ENCODE measurements at regions of chr3 and their contacts with region 1.

Region 1: DNA sequence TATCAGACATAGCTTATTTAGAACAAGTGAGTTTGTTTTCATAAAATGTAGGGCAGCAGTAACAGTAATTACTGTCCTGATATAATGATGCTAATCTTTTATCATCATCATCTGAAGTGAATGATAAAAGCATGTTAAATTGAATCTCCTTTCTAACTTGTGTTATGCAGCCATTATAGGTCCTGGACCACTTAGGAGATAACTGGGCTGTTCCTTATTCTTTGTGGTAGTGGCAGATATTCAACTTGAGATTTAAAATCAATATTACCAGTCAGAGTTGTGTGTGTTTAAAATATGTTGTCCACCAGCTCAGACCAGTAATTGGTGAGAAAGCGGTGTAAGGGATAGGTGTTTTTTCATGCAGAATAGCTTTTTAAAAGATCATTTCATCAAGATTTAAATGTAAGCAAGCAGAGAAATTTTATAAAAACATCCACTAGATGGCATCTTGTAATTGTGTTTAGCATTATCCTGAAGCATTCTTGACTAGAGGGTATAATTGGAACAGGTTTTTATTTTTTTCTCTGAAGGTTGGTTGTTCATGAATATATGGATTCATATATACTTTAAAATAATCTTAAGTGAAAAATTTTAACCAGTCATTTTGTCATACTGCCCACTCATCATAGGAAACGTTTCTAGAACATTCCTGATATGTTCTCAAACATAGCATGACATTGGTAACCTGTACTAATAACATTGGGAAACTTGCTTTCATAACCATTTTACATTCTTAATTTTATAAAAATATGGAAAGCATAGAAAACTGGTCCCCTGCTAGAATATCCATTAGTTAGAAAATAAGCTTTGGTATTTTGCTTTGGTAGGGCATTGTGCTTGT is 153.9 kb downstream of the BBX start:
- DNase-seq: peak in 1 of 35 experiments; percentile 42
- ATAC-seq: peak in 2 of 4 experiments; percentile 50 to 54
- H3K4me3 ChIP-seq: no peak overlapping the region
- H3K4me3 Mint-ChIP-seq: no peak overlapping the region
- H3K27ac ChIP-seq: no peak overlapping the region
- H3K27ac Mint-ChIP-seq: peak overlapping the region in 1 of 2 donors; percentile 3
- H3K4me1 ChIP-seq: peaks cover 0 to 6% of the 10 kb centered on the region in 2 experiments
- H3K4me1 Mint-ChIP-seq: peaks cover 41 to 42% (median 41%) of the 10 kb centered on the region in 3 donors
- H3K27me3 ChIP-seq: no peaks in the 10 kb centered on the region
- H3K27me3 Mint-ChIP-seq: no peaks in the 10 kb centered on the region

Region 2: DNA sequence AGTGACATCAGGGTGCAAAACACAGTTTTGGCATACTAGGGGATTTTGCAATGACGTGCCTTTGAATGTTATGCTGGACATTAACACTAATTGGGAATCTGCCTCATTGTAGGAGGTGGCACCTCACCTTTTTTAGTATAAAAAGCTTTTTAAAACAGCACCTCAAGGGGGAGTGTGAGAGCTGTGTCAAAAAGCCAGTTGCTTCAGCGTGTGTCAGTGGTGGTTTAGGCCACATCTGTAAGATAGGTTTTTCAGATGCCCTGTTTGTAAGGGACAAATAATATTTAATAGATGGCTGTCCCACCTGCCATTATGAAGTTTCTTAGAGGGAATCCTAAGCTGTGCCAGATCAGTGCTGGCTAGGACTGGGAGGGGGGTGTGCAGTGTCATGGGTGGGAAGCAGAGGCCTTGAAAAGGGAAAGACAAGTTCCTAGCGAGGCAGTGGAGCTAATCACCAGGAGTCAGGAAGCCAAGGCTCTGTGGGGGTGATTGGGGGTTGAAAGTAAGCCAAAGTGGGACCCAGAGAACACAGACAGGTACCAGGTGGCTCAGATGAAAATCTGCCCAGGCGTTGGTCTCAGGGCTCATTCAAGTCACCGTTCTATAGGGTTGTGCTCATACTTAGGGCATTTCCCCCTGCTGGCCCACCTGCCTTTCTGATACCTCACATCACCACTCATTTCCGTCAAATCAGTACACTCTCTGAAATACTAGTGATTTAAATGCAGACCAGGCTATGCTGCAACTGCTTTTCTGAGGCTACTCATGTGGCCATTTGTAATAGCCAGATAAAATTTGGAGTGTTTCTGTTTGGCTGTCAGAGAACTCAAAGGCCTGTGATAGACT is 33.4 kb before region 1 on chr3:
- CTCF ChIA-PET with region 1: interaction called in 1 of 2 experiments, 20 read pairs
- POLR2A ChIA-PET with region 1: no interaction called
- DNase-seq: peak in 1 of 35 experiments; percentile 9
- ATAC-seq: no peak
- H3K4me3 ChIP-seq: no peak overlapping the region
- H3K4me3 Mint-ChIP-seq: no peak overlapping the region
- H3K27ac ChIP-seq: no peak overlapping the region
- H3K27ac Mint-ChIP-seq: no peak overlapping the region
- H3K4me1 ChIP-seq: peaks cover 0 to 7% of the 10 kb centered on the region in 2 experiments
- H3K4me1 Mint-ChIP-seq: peaks cover 20 to 35% (median 27%) of the 10 kb centered on the region in 3 donors
- H3K27me3 ChIP-seq: no peaks in the 10 kb centered on the region
- H3K27me3 Mint-ChIP-seq: no peaks in the 10 kb centered on the region

Region 3: DNA sequence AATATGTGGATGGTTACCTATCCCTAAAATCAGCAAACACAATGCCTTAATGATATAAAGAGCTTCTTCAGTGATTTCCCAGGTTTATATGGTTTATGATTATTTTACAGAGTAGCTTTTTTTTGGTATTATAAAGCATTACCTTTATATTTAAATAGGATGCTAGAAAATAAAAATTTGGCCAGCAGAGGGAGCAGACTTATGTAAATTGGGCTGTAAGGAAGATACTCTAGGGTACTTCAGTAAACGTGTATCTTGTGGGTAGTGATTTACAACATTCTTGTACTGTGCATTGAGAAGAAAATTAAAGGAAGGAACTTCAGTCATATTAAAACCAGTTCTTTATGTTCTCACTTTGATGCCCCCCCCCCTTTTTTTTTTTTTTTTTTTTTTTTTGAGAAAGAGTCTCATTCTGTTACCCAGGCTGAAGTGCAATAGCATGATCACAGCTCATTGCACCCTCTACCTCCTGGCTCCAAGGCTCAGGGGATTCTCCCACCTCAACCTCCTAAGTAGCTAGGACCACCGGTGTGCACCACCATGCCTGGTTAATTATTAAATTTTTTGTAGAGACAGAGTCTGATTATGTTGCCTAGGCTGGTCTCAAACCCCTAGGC is 13.9 kb after region 1 on chr3:
- CTCF ChIA-PET with region 1: interaction called, 19 to 27 read pairs
- POLR2A ChIA-PET with region 1: no interaction called
- DNase-seq: peak in 2 of 35 experiments; percentile 6 to 71
- ATAC-seq: peak; percentile 43 to 74 (median 54)
- H3K4me3 ChIP-seq: no peak overlapping the region
- H3K4me3 Mint-ChIP-seq: no peak overlapping the region
- H3K27ac ChIP-seq: no peak overlapping the region
- H3K27ac Mint-ChIP-seq: no peak overlapping the region
- H3K4me1 ChIP-seq: peaks cover 0 to 4% of the 10 kb centered on the region in 2 experiments
- H3K4me1 Mint-ChIP-seq: peaks cover 28 to 39% (median 34%) of the 10 kb centered on the region in 3 donors
- H3K27me3 ChIP-seq: no peaks in the 10 kb centered on the region
- H3K27me3 Mint-ChIP-seq: no peaks in the 10 kb centered on the region